ENCODE measurements at regions of chr2 and their contacts with region 1.

Region 1: DNA sequence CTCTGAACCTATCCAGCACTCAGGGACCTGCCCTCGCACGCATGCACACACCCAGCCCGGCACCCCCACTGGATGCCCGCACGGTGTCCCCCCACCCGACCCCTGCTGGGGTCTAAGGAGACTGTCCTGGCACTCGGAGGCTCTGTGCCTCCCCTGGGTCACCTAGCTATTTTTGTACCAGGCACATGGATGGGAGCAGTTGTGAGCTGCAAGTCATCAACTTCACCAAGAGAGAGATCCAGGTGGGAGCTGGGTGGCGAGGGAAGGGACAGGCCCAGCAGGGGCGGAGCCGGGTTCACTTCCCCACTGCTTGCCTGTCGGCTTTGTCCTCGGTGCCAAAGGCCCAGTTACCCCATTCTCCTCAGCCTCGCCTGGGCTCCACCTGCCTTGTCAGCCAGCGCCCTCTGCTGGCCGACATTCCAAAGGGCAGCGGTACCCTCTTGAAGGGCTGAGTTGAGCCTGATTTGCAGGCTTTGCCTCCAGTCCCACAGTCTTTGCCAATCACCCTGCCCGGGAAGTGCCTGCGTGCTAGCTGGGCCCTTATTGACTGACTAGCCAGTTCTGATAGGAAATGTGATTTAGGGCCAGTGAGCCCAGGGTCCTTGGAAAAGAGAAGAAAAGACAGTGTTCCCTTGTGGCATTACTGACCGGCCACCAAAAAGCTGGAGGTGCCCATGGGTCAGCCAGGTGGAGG is 5.8 kb downstream of the NT5DC4 start:
- DNase-seq: peak; percentile 93
- ATAC-seq: peak; percentile 99
- H3K4me3 Mint-ChIP-seq: no peak overlapping the region
- H3K27ac Mint-ChIP-seq: peak overlapping the region; percentile 75
- H3K4me1 Mint-ChIP-seq: peaks cover 19% of the 10 kb centered on the region
- H3K27me3 Mint-ChIP-seq: peaks cover 10% of the 10 kb centered on the region

Region 2: GRCh38 chr2:112433932-112434730 is 292.5 kb before region 1 on chr2:
- CTCF ChIA-PET with region 1: no interaction called
- DNase-seq: no peak
- ATAC-seq: no peak
- H3K4me3 Mint-ChIP-seq: no peak overlapping the region
- H3K27ac Mint-ChIP-seq: no peak overlapping the region
- H3K4me1 Mint-ChIP-seq: peaks cover 12% of the 10 kb centered on the region
- H3K27me3 Mint-ChIP-seq: peaks cover 8% of the 10 kb centered on the region

Region 3: DNA sequence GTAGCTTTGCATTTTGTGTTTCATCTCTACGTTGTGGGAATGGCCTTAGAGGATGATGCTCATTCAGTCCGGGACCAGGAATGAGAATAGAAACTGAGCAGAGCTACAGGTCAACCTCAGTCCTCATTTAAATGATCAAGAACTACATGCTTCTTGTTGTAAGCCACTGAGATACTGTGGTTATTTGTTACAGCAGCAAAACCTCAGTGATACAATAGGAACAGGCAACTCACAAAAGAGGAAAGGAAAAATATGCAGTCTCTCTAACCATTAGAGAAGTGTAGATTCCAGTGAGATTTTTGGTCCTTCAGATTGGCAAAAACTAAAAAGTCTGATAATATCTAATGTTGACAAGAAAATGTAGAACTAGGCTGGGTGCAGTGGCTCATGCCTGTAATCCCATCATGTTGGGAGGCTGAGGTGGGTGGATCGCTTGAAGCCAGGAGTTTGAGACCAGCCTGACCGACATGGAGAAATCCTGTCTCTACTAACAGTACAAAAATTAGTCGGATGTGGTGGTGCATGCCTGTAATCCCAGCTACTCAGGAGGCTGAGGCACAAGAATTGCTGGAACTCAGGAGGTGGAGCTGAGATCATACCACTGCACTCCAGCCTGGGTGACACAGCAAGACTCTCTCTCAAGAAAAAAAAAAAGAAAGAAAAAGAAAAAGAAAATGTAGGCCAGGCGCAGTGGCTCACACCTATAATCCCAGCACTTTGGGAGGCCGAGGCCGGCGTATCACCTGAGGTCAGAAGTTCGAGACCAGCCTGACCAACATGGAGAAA is 128.9 kb before region 1 on chr2:
- CTCF ChIA-PET with region 1: interaction called, 155 read pairs
- DNase-seq: no peak
- ATAC-seq: no peak
- H3K4me3 Mint-ChIP-seq: no peak overlapping the region
- H3K27ac Mint-ChIP-seq: no peak overlapping the region
- H3K4me1 Mint-ChIP-seq: peaks cover 6% of the 10 kb centered on the region
- H3K27me3 Mint-ChIP-seq: no peaks in the 10 kb centered on the region

Region 4: GRCh38 chr2:112626604-112627059 is 100.0 kb before region 1 on chr2:
- CTCF ChIA-PET with region 1: interaction called, 247 read pairs
- DNase-seq: peak; percentile 80
- ATAC-seq: peak; percentile 55
- H3K4me3 Mint-ChIP-seq: no peak overlapping the region
- H3K27ac Mint-ChIP-seq: peak overlapping the region; percentile 72
- H3K4me1 Mint-ChIP-seq: peaks cover 74% of the 10 kb centered on the region
- H3K27me3 Mint-ChIP-seq: peaks cover 2% of the 10 kb centered on the region

Region 5: GRCh38 chr2:112666764-112667122 is 59.9 kb before region 1 on chr2:
- CTCF ChIA-PET with region 1: interaction called, 21 read pairs
- DNase-seq: no peak
- ATAC-seq: no peak
- H3K4me3 Mint-ChIP-seq: no peak overlapping the region
- H3K27ac Mint-ChIP-seq: no peak overlapping the region
- H3K4me1 Mint-ChIP-seq: peaks cover 14% of the 10 kb centered on the region
- H3K27me3 Mint-ChIP-seq: peaks cover 2% of the 10 kb centered on the region

Region 6: DNA sequence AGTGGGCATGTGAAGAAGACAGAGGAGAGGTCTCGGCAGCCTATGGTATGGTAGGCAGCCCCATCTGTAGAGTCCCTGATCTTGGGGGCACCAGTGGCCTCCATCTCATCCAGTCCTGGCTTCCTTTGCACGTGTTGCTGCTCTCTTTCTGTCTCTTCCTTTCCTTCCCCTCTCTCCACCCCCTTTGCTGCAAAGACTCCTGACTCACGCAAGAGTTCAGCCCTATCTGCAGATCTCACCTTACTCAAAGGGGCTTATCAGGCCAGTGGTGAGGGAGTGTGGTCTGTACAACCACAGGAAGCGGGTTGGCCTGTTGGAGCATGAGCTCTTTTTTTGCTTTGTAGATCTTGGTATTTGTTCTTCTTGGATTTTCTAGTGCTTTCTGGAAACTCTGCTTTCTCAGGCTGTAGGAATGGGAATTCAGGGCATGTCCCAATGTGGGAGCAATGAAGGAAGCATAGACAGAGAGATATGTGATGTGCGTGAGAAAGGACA is 20.4 kb before region 1 on chr2:
- CTCF ChIA-PET with region 1: interaction called, 59 read pairs
- DNase-seq: peak; percentile 96
- ATAC-seq: peak; percentile 97
- H3K4me3 Mint-ChIP-seq: peak overlapping the region; percentile 33
- H3K27ac Mint-ChIP-seq: peak overlapping the region; percentile 84
- H3K4me1 Mint-ChIP-seq: peaks cover 66% of the 10 kb centered on the region
- H3K27me3 Mint-ChIP-seq: peaks cover 3% of the 10 kb centered on the region

Region 7: DNA sequence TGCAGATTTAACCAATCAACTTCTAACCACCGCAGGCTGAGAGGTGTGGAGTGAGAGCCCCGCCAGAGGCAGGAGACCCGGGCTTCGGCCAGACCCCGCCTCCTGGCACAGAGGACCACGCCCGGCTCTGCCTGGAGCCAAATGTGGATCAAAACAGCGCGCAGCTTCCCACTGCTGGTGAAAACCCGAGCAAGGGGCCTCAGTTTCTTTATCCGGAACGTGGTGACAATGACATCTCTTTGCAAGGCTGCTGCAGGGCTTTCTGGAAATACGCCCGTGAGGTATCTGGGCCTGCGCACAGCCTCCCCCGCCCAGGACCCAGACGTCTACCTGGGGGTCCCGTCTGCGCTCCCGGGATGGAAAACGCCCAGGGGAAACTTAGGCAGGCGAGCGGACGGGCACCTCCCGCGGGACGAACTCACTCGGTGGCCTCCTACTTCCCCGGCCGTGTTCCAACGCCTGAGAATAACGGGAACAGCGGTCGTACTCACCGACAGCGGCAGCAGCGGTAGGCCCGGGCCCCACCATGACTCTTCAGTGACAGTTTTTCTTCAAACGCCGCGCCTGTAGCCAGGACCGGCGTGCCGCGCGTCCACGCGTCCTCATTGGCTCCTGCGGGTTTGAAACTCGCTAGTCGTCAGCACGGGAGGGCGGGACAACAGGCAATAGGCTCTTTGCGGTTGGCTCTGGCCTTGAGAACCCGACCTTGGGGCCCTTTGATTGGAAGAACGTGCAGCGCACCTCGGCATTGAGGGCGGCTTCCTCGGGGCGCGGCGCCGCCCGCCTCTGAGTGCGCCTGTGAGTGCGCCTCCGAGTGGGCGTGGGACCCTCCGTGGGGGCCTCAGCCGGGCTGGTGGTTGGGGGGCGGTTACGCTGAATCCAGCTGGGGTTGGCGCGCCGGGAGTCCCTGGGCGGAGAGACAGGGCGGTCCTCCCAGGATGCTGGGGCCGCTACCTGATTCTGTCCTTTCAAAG is 37.7 kb after region 1 on chr2 and contains the start of gene CKAP2L:
- CTCF ChIA-PET with region 1: no interaction called
- DNase-seq: peak; percentile 99
- ATAC-seq: peak; percentile 97
- H3K4me3 Mint-ChIP-seq: peak within 1 kb of the TSS; percentile 85
- H3K27ac Mint-ChIP-seq: peak within 1 kb of the TSS; percentile 99
- H3K4me1 Mint-ChIP-seq: peaks cover 57% of the 10 kb centered on the region
- H3K27me3 Mint-ChIP-seq: no peaks in the 10 kb centered on the region
- total RNA-seq, gene CKAP2L: 62.2 to 68.8 TPM

Region 8: GRCh38 chr2:112941753-112942658 is 215.4 kb after region 1 on chr2:
- CTCF ChIA-PET with region 1: interaction called, 32 read pairs
- DNase-seq: peak; percentile 87
- ATAC-seq: peak; percentile 98
- H3K4me3 Mint-ChIP-seq: no peak overlapping the region
- H3K27ac Mint-ChIP-seq: no peak overlapping the region
- H3K4me1 Mint-ChIP-seq: no peaks in the 10 kb centered on the region
- H3K27me3 Mint-ChIP-seq: peaks cover 26% of the 10 kb centered on the region

Measured in activated CD8-positive, alpha-beta memory T cell treated with anti-CD3 and anti-CD28 coated beads, Interleukin-2, amount 10 ng/mL, durations not matched to agents 7 days and 5 days (primary cell).